Endothelial cell of umbilical vein (primary cell): ENCODE measurements at regions of chr12 and their contacts with region 1.

Region 1: DNA sequence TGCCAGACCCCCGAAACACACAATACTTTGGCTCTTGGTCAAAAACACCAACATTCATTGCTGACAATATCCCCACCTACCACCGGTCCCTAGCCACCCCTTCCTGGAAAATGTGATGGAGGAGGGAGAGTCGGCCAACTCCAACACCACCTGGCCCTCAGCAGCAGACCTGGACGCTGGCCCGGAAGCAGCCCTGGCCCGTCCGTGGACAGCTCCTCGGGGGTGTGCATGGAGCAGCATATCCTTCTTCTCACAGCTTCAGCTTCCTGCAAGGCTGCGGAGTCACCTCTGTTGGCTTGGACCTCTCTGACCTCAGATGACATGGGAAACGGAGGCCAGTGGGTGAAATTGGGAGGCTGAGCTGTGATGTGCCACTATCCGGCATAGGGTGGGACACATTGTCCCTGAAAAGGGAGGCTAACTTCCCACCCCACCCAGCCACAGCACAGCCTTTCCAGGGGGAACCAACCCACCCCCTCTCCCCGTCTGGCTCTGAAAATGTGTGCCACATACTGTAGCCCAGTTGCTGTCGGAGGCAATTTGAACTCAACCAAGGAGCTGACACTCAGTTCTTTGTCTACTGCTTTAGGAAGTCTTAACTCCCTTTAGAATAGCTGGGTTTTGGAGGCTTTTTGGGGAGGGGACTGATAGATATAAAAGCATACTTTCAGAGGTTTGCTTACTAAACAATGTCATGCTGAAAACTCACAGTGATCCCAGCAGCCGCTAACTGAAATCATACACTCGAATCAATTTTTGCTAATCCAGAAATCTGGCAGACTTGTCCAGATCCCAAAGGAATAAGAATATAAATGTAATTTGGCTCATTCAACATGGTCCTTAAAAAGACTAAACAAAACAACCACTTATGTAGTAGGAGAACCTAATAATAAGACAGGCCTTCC is 43.1 kb upstream of the LTA4H start:
- DNase-seq: peak; percentile 89
- H3K4me3 ChIP-seq: no peak overlapping the region
- H3K27ac ChIP-seq: no peak overlapping the region
- H3K4me1 ChIP-seq: peaks cover 28% of the 10 kb centered on the region
- H3K27me3 ChIP-seq: no peaks in the 10 kb centered on the region
- CTCF ChIP-seq: no peak
- POLR2A ChIP-seq: no peak

Region 2: DNA sequence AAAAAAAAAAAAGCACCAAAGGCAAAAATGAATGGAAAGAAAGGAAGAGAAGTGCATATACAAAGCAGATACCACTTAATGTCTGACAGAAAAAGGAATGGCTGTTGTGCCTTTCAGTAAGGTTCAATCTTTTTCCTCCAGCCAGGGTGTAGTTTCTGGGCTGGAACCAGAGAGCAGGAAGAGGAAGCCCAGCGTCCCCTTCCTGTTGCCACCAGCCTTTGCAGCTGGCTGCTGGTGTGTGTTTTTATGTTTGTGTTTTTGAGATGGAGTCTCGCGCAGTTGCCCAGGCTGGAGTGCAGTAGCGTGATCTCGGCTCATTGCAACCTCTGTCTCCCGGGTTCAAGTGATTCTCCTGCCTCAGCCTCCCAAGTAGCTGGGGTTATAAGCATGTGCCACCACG is 21.5 kb after region 1 on chr12:
- CTCF ChIA-PET with region 1: interaction called, 4 read pairs
- POLR2A ChIA-PET with region 1: no interaction called
- dilution Hi-C with region 1: no loop called
- intact Hi-C with region 1: loop called (anchors 2 kb)
- DNase-seq: peak; percentile 61
- H3K4me3 ChIP-seq: no peak overlapping the region
- H3K27ac ChIP-seq: no peak overlapping the region
- H3K4me1 ChIP-seq: peaks cover 21% of the 10 kb centered on the region
- H3K27me3 ChIP-seq: no peaks in the 10 kb centered on the region
- CTCF ChIP-seq: no peak
- POLR2A ChIP-seq: no peak

Region 3: GRCh38 chr12:96120359-96121100 is 42.0 kb after region 1 on chr12:
- CTCF ChIA-PET with region 1: no interaction called
- POLR2A ChIA-PET with region 1: no interaction called
- dilution Hi-C with region 1: no loop called
- intact Hi-C with region 1: no loop called
- DNase-seq: no peak
- H3K4me3 ChIP-seq: no peak overlapping the region
- H3K27ac ChIP-seq: no peak overlapping the region
- H3K4me1 ChIP-seq: peaks cover 11% of the 10 kb centered on the region
- H3K27me3 ChIP-seq: no peaks in the 10 kb centered on the region
- CTCF ChIP-seq: no peak
- POLR2A ChIP-seq: no peak

Region 4: GRCh38 chr12:96335270-96335669 is 256.8 kb after region 1 on chr12:
- CTCF ChIA-PET with region 1: no interaction called
- POLR2A ChIA-PET with region 1: no interaction called
- dilution Hi-C with region 1: no loop called
- intact Hi-C with region 1: no loop called
- DNase-seq: peak; percentile 39
- H3K4me3 ChIP-seq: no peak overlapping the region
- H3K27ac ChIP-seq: no peak overlapping the region
- H3K4me1 ChIP-seq: peaks cover 30% of the 10 kb centered on the region
- H3K27me3 ChIP-seq: no peaks in the 10 kb centered on the region
- CTCF ChIP-seq: no peak
- POLR2A ChIP-seq: no peak